Gastrocnemius medialis (tissue), 4 donors: ENCODE measurements at regions of chr17 and their contacts with region 1.

Region 1: GRCh38 chr17:71412803-71413202 is 708.0 kb upstream of the SOX9 start:
- DNase-seq: no peak
- ATAC-seq: no peak
- H3K4me3 ChIP-seq: no peak overlapping the region
- H3K27ac ChIP-seq: no peak overlapping the region
- H3K4me1 ChIP-seq: no peaks in the 10 kb centered on the region
- H3K27me3 ChIP-seq: no peaks in the 10 kb centered on the region
- CTCF ChIP-seq: no peak
- POLR2A ChIP-seq: no peak

Region 2: DNA sequence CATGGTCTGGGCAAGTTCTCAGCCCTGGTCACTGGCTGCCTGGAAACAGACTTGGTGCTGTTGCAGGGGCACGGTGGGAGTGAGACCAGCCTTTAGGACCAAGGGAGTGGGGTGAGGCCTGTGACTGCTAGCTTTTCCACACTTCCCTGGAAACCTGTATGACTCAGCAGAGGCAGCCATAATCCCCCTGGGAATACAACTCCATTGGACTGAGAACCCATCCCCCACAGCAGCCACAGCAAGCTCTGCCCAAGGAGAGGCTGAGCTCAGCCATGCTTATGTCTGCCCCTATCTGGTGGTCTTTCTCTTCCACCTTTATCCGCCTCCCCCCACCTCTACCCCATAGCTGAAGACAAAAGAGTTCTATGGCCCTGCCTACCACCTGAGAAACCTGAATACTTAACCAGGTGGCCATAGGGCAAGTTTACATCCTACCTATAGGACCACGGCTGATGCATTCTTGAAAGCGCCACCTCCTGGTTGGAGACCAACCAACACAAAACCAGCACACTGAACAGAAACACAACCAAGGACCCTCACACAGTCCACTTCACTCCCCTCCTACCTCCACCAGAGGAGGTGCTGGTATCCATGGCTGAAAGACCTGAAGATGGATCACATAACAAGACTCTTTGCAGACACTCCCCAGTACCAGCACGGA is 108.2 kb before region 1 on chr17:
- in situ Hi-C with region 1: loop called in 1 of 4 experiments (anchors 25 kb)
- intact Hi-C with region 1: no loop called
- DNase-seq: no peak
- ATAC-seq: no peak
- H3K4me3 ChIP-seq: no peak overlapping the region
- H3K27ac ChIP-seq: no peak overlapping the region
- H3K4me1 ChIP-seq: no peaks in the 10 kb centered on the region
- H3K27me3 ChIP-seq: no peaks in the 10 kb centered on the region
- CTCF ChIP-seq: no peak
- POLR2A ChIP-seq: no peak

Region 3: GRCh38 chr17:71392715-71393567 is 19.9 kb before region 1 on chr17:
- in situ Hi-C with region 1: no loop called
- intact Hi-C with region 1: no loop called
- DNase-seq: no peak
- ATAC-seq: no peak
- H3K4me3 ChIP-seq: no peak overlapping the region
- H3K27ac ChIP-seq: no peak overlapping the region
- H3K4me1 ChIP-seq: no peaks in the 10 kb centered on the region
- H3K27me3 ChIP-seq: no peaks in the 10 kb centered on the region
- CTCF ChIP-seq: no peak
- POLR2A ChIP-seq: no peak

Region 4: DNA sequence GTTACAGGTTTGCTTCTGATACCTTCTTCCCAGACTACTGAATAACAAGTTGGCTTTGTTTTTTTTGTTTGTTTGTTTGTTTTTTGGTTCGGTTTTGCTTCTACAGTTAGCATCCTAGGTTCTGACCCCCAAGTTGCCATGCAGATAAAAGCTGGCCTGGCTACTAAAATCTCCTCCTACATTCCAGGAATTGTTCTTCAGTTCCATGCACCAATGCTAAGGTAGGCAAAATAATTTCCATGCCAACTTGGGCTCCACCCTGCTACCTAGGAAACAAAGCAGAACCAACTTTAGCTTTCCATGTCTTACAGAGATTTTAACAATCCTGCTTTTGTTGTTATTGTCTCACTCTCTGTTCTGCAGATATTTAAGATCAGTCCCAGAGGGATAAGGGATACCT is 212.5 kb after region 1 on chr17:
- in situ Hi-C with region 1: no loop called
- intact Hi-C with region 1: no loop called
- DNase-seq: no peak
- ATAC-seq: no peak
- H3K4me3 ChIP-seq: no peak overlapping the region
- H3K27ac ChIP-seq: no peak overlapping the region
- H3K4me1 ChIP-seq: no peaks in the 10 kb centered on the region
- H3K27me3 ChIP-seq: peaks cover 0 to 2% (median 0%) of the 10 kb centered on the region in 3 donors
- CTCF ChIP-seq: no peak
- POLR2A ChIP-seq: no peak